Activated T-helper 2 cell treated with anti-CD3 and anti-CD28 coated beads, Interferon-gamma antibody, Interleukin-2, Interleukin-4, amounts not matched to agents 10 μg/mL and 5 μg/mL and 100 μg/mL, durations not matched to agents 14 hours and 24 hours and 36 hours (primary cell): ENCODE measurements at regions of chr3 and their contacts with region 1.

Region 1: GRCh38 chr3:41961750-41962679 is at the start of gene ULK4:
- DNase-seq: peak; percentile 94
- H3K4me3 Mint-ChIP-seq: peak within 1 kb of the TSS; percentile 96
- H3K27ac Mint-ChIP-seq: peak within 1 kb of the TSS; percentile 90
- H3K4me1 Mint-ChIP-seq: peaks cover 19% of the 10 kb centered on the region
- H3K27me3 Mint-ChIP-seq: peaks cover under 1% of the 10 kb centered on the region
- total RNA-seq, gene ULK4: 7.5 and 8.1 TPM in 2 replicates

Region 2: GRCh38 chr3:42159706-42160472 is 197.9 kb after region 1 on chr3:
- intact Hi-C with region 1: loop called (anchors 5 kb)
- DNase-seq: peak; percentile 34
- H3K4me3 Mint-ChIP-seq: peak overlapping the region; percentile 55
- H3K27ac Mint-ChIP-seq: peak overlapping the region; percentile 43
- H3K4me1 Mint-ChIP-seq: peaks cover 39% of the 10 kb centered on the region
- H3K27me3 Mint-ChIP-seq: no peaks in the 10 kb centered on the region

Region 3: GRCh38 chr3:42403737-42404136 is 441.7 kb after region 1 on chr3:
- intact Hi-C with region 1: no loop called
- DNase-seq: no peak
- H3K4me3 Mint-ChIP-seq: no peak overlapping the region
- H3K27ac Mint-ChIP-seq: no peak overlapping the region
- H3K4me1 Mint-ChIP-seq: no peaks in the 10 kb centered on the region
- H3K27me3 Mint-ChIP-seq: no peaks in the 10 kb centered on the region